Naive thymus-derived CD4-positive, alpha-beta T cell (primary cell): ENCODE measurements at regions of chr5 and their contacts with region 1.

Region 1: GRCh38 chr5:76256116-76256889 is 146.8 kb upstream of the IQGAP2 start:
- DNase-seq: peak; percentile 20 to 70 (median 56)
- ATAC-seq: peak; percentile 96
- H3K4me3 ChIP-seq: no peak overlapping the region
- H3K4me3 Mint-ChIP-seq: peak overlapping the region in 4 of 10 donors; percentile 23 to 45 (median 42)
- H3K27ac ChIP-seq: no peak overlapping the region
- H3K27ac Mint-ChIP-seq: peak overlapping the region in 3 of 9 donors; percentile 8 to 23 (median 11)
- H3K4me1 ChIP-seq: no peaks in the 10 kb centered on the region
- H3K4me1 Mint-ChIP-seq: peaks cover 0 to 12% (median 3%) of the 10 kb centered on the region in 7 donors
- H3K27me3 ChIP-seq: no peaks in the 10 kb centered on the region
- H3K27me3 Mint-ChIP-seq: peaks cover 4 to 36% (median 4%) of the 10 kb centered on the region in 5 donors

Region 2: GRCh38 chr5:74766849-74767578 is 1489.3 kb before region 1 on chr5 and contains the starts of genes GFM2 and NSA2:
- CTCF ChIA-PET with region 1: no interaction called
- POLR2A ChIA-PET with region 1: no interaction called
- intact Hi-C with region 1: loop called in 1 of 2 experiments (anchors 2 kb)
- DNase-seq: peak; percentile 77 to 94 (median 92)
- ATAC-seq: peak; percentile 97
- H3K4me3 ChIP-seq: peak within 1 kb of the TSS; percentile 98
- H3K4me3 Mint-ChIP-seq: peak within 1 kb of the TSS; percentile 97 to 100 (median 99)
- H3K27ac ChIP-seq: peak within 1 kb of the TSS; percentile 81
- H3K27ac Mint-ChIP-seq: peak within 1 kb of the TSS; percentile 95 to 99 (median 98)
- H3K4me1 ChIP-seq: peaks cover 22% of the 10 kb centered on the region in 2 donors
- H3K4me1 Mint-ChIP-seq: peaks cover 12 to 57% (median 40%) of the 10 kb centered on the region in 7 donors
- H3K27me3 ChIP-seq: no peaks in the 10 kb centered on the region
- H3K27me3 Mint-ChIP-seq: no peaks in the 10 kb centered on the region
- total RNA-seq, gene GFM2: 17.8 to 30.2 (median 20.5) TPM
- total RNA-seq, gene NSA2: 70.9 to 153 (median 126) TPM

Region 3: GRCh38 chr5:75236322-75237316 is 1019.7 kb before region 1 on chr5 and contains the start of gene ANKRD31:
- CTCF ChIA-PET with region 1: interaction called, 3 read pairs
- POLR2A ChIA-PET with region 1: no interaction called
- intact Hi-C with region 1: loop called (anchors 2 to 5 kb)
- DNase-seq: peak; percentile 83 to 97 (median 93)
- ATAC-seq: peak; percentile 100
- H3K4me3 ChIP-seq: peak within 1 kb of the TSS; percentile 69
- H3K4me3 Mint-ChIP-seq: peak within 1 kb of the TSS; percentile 78 to 99 (median 96)
- H3K27ac ChIP-seq: peak within 1 kb of the TSS; percentile 80
- H3K27ac Mint-ChIP-seq: peak within 1 kb of the TSS; percentile 89 to 99 (median 98)
- H3K4me1 ChIP-seq: peaks cover 0 to 17% of the 10 kb centered on the region in 2 donors
- H3K4me1 Mint-ChIP-seq: peaks cover 3 to 22% (median 18%) of the 10 kb centered on the region in 7 donors
- H3K27me3 ChIP-seq: no peaks in the 10 kb centered on the region
- H3K27me3 Mint-ChIP-seq: peaks cover 0 to 4% (median 0%) of the 10 kb centered on the region in 5 donors
- total RNA-seq, gene ANKRD31: 0.29 to 1.6 (median 0.93) TPM

Region 4: GRCh38 chr5:75584641-75585040 is 671.7 kb before region 1 on chr5:
- CTCF ChIA-PET with region 1: no interaction called
- POLR2A ChIA-PET with region 1: no interaction called
- intact Hi-C with region 1: loop called in 1 of 2 experiments (anchors 10 kb)
- DNase-seq: no peak
- ATAC-seq: no peak
- H3K4me3 ChIP-seq: no peak overlapping the region
- H3K4me3 Mint-ChIP-seq: no peak overlapping the region
- H3K27ac ChIP-seq: no peak overlapping the region
- H3K27ac Mint-ChIP-seq: no peak overlapping the region
- H3K4me1 ChIP-seq: no peaks in the 10 kb centered on the region
- H3K4me1 Mint-ChIP-seq: peaks cover 0 to 4% (median 2%) of the 10 kb centered on the region in 7 donors
- H3K27me3 ChIP-seq: no peaks in the 10 kb centered on the region
- H3K27me3 Mint-ChIP-seq: no peaks in the 10 kb centered on the region

Region 5: DNA sequence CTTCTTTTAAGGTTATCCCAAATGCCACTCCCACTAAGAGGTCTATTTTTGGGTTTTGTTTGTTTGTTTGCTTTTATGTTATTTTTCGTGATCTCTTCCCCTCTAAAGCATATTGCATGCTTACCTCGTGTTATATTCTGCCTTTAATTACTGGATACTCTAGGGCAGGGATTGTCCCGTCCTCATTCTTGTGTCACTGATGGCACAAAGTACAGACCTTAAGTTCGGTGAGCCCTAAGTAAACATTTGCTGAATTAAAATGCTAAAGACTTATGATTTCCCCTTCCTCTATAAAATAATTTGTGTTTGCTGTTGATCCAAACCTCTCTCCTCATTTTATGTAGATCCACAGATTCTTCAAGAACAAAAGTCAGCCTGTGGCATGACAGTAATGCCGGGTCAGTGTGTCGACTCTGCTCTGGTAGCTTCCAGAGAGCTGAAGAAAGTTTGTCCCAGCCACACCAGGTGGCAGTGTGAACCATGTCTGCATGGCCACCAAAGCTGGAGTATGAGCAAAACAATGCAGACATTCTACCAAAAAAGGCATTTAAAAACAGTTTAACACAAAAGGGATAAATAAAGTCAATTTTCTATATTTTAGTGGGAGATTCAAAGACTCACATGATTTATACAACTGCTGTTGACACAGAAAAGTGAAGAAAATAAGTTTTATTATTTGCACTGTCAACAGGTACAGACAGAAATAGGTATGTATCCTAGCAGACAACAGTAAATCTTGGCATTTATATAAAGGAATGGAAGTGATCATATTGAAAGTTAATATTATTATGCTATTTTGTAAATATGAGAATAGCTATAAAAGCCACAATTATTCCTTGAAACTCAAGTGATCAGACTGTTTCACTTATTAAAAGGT is 521.2 kb before region 1 on chr5:
- CTCF ChIA-PET with region 1: no interaction called
- POLR2A ChIA-PET with region 1: no interaction called
- intact Hi-C with region 1: loop called in 1 of 2 experiments (anchors 1 kb)
- DNase-seq: peak in 2 of 9 donors; percentile 14
- ATAC-seq: no peak
- H3K4me3 ChIP-seq: no peak overlapping the region
- H3K4me3 Mint-ChIP-seq: no peak overlapping the region
- H3K27ac ChIP-seq: no peak overlapping the region
- H3K27ac Mint-ChIP-seq: no peak overlapping the region
- H3K4me1 ChIP-seq: no peaks in the 10 kb centered on the region
- H3K4me1 Mint-ChIP-seq: no peaks in the 10 kb centered on the region
- H3K27me3 ChIP-seq: no peaks in the 10 kb centered on the region
- H3K27me3 Mint-ChIP-seq: peaks cover 3 to 13% (median 6%) of the 10 kb centered on the region in 5 donors

Region 6: GRCh38 chr5:76074487-76075065 is 181.7 kb before region 1 on chr5:
- CTCF ChIA-PET with region 1: interaction called, 4 read pairs
- POLR2A ChIA-PET with region 1: no interaction called
- intact Hi-C with region 1: loop called in 1 of 2 experiments (anchors 1 kb)
- DNase-seq: peak in 4 of 9 donors; percentile 8 to 13 (median 10)
- ATAC-seq: peak; percentile 61
- H3K4me3 ChIP-seq: no peak overlapping the region
- H3K4me3 Mint-ChIP-seq: no peak overlapping the region
- H3K27ac ChIP-seq: no peak overlapping the region
- H3K27ac Mint-ChIP-seq: no peak overlapping the region
- H3K4me1 ChIP-seq: no peaks in the 10 kb centered on the region
- H3K4me1 Mint-ChIP-seq: no peaks in the 10 kb centered on the region
- H3K27me3 ChIP-seq: no peaks in the 10 kb centered on the region
- H3K27me3 Mint-ChIP-seq: peaks cover 51 to 73% (median 63%) of the 10 kb centered on the region in 5 donors

Region 7: DNA sequence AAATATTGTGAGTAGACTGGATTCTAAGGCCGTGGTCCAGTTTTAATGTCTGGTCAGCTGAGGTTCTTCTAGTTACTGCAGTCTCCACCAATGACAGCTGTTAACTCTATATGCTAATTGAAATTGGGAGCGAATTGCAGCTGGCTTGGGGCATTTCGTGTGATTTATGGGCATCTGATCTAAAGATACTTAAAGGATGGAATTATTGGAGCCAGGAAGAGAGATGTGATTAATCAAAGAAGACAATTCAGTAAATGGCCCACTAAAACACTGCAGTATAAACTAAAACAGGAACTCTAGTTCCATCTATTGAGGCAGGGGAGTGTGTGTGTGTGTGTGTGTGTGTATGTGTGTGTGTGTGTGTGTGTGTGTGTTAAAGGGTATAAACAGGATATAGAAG is 10.7 kb before region 1 on chr5:
- CTCF ChIA-PET with region 1: no interaction called
- POLR2A ChIA-PET with region 1: no interaction called
- intact Hi-C with region 1: no loop called
- DNase-seq: no peak
- ATAC-seq: no peak
- H3K4me3 ChIP-seq: no peak overlapping the region
- H3K4me3 Mint-ChIP-seq: no peak overlapping the region
- H3K27ac ChIP-seq: no peak overlapping the region
- H3K27ac Mint-ChIP-seq: no peak overlapping the region
- H3K4me1 ChIP-seq: no peaks in the 10 kb centered on the region
- H3K4me1 Mint-ChIP-seq: no peaks in the 10 kb centered on the region
- H3K27me3 ChIP-seq: no peaks in the 10 kb centered on the region
- H3K27me3 Mint-ChIP-seq: peaks cover 0 to 14% (median 2%) of the 10 kb centered on the region in 5 donors

Region 8: DNA sequence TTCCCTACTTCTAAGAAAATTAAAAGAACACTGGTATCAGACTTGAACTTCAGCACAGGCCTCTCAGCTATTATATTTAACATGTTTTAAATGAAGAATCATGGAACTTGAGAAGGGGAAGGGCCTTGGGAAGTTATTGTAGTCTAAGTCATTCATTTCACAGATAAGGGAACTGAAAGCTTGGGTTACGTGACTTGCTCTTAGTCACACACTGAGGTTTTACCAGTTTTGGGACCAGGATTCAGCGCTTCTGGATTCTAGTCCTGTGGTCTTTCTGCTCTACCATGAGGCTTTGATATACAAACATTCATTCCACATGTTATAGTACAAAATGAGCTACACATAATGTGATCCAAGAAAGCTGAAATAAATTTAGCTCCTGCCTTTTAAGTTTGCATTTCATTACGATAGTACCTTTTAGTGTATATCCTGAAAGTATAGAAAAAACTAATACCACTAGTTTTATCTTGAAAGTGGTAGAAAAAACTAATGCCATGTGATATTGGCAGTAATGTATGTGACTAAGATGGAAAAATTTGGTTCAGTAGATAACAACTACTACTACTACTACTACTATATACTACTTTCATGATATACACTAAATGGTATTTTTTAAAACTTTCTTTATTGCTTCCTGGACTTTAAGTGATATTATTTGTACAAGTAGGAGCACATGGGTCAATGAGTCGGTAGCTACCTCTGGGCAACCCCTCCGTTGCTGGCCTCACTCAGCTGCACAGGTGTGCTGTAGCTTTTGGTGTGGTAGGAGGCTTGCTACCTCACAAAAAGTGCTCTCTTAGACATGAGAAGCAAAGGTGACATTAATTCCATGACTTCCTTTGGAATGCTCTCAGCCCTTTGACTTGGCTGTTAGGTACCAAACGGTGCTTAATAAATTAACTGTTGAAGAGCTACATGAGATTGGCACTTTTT is 326.2 kb after region 1 on chr5:
- CTCF ChIA-PET with region 1: interaction called, 9 read pairs
- POLR2A ChIA-PET with region 1: no interaction called
- intact Hi-C with region 1: loop called in 1 of 2 experiments (anchors 1 kb)
- DNase-seq: no peak
- ATAC-seq: peak; percentile 76
- H3K4me3 ChIP-seq: no peak overlapping the region
- H3K4me3 Mint-ChIP-seq: no peak overlapping the region
- H3K27ac ChIP-seq: no peak overlapping the region
- H3K27ac Mint-ChIP-seq: peak overlapping the region in 4 of 9 donors; percentile 18 to 76 (median 47)
- H3K4me1 ChIP-seq: no peaks in the 10 kb centered on the region
- H3K4me1 Mint-ChIP-seq: peaks cover 0 to 31% (median 13%) of the 10 kb centered on the region in 7 donors
- H3K27me3 ChIP-seq: no peaks in the 10 kb centered on the region
- H3K27me3 Mint-ChIP-seq: no peaks in the 10 kb centered on the region